ENCODE measurements at regions of chr1 and their contacts with region 1.

Region 1: DNA sequence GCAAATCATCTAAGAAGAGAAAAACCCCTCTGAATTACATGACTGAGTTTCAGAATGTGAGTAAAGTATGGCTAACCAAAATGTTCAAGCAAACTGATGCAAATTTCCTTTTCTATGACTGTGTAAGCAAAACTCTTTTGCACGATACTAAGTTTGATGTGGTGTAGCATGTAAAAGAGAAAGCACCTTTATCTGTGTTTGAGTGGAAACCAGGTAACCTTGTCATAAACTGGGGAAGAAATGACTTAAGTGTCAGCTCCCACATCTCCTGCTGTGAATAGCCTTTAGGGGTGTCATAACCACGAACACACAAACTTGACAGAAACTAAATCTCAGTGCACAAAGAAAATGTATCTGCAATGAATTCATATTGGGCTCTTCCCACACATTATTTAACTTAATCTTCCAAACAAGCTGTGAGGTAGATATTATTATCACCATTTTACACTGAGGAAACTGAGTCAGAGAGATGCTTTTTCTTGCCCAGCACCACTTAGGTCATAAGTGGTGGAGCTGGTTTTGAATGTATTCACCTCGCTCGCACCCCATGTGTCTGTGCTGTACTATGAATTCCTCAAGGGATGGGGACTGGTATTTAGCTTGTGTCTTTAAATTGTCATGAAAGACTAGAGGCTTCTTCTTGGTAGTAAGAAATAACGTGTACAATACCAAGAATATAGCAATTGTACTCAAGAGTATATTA is 32.9 kb upstream of the IL12RB2 start:
- DNase-seq: peak; percentile 44
- ATAC-seq: peak; percentile 90
- H3K4me3 Mint-ChIP-seq: no peak overlapping the region
- H3K27ac Mint-ChIP-seq: peak overlapping the region; percentile 76
- H3K4me1 Mint-ChIP-seq: peaks cover 54% of the 10 kb centered on the region
- H3K27me3 Mint-ChIP-seq: peaks cover 3% of the 10 kb centered on the region

Region 2: DNA sequence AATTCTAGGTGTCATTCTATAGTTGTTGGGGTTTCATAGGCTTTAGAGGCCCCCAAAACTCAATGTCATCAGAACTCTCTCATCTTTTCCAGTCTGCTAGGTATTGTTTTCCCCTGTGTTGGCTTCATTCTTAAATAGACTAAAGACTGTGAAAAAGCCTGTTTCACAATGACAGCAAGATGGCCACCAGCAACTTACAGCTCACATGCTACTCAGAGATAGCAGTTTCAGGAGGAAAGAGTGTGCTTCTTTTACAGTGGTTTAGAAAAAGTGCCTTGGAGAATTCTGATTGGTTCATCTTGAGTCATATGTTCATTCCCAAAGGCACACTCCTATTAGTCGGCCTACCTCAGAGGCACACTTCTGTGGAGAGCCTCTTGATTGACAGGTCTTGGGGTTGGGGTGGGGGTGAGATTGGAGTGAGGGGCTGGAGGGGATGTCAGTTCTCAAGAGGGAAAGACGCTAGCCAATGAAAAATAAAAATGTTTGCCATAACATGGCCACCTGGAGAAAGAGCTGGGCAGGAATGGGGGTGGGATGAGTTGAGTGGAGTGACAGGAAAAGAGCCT is 100.0 kb before region 1 on chr1:
- CTCF ChIA-PET with region 1: interaction called, 4 read pairs
- POLR2A ChIA-PET with region 1: interaction called, 7 read pairs
- intact Hi-C with region 1: loop called (anchors 1 kb)
- DNase-seq: peak; percentile 61
- ATAC-seq: peak; percentile 70
- H3K4me3 Mint-ChIP-seq: peak overlapping the region; percentile 25
- H3K27ac Mint-ChIP-seq: peak overlapping the region; percentile 94
- H3K4me1 Mint-ChIP-seq: peaks cover 68% of the 10 kb centered on the region
- H3K27me3 Mint-ChIP-seq: no peaks in the 10 kb centered on the region

Region 3: GRCh38 chr1:67239738-67240137 is 35.0 kb before region 1 on chr1:
- CTCF ChIA-PET with region 1: no interaction called
- POLR2A ChIA-PET with region 1: interaction called, 6 read pairs
- intact Hi-C with region 1: loop called in 1 of 2 experiments (anchors 2 kb)
- DNase-seq: peak; percentile 32
- ATAC-seq: peak; percentile 54
- H3K4me3 Mint-ChIP-seq: no peak overlapping the region
- H3K27ac Mint-ChIP-seq: peak overlapping the region; percentile 52
- H3K4me1 Mint-ChIP-seq: peaks cover 28% of the 10 kb centered on the region
- H3K27me3 Mint-ChIP-seq: peaks cover 2% of the 10 kb centered on the region

Region 4: DNA sequence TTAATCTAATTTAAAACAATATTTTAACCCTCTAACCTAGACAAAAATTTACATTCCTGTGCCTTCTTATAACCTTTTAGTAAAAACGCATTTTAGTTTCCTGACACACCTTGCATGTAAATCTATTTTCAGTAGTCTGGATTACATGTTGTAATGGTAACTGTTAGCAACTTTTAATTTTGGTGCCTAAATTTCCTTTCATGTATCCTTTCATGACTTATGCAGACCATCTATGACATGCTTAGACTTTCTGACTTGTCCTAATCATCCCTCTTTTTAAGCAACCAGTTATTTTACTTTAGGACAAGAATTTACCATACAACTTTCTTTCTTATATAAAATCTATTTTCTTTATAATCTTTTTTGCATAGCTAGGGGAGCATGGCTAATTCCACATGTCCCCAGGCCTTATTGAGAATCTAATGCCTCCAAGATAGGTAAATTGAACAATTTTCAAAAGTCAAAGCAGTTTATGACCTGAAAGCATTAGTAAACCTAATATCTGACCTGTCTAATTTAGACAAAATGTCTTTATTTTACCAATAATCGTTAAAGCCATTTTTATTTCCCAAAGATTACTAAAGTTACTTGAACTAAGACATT is 24.6 kb before region 1 on chr1:
- CTCF ChIA-PET with region 1: no interaction called
- POLR2A ChIA-PET with region 1: no interaction called
- intact Hi-C with region 1: no loop called
- DNase-seq: no peak
- ATAC-seq: no peak
- H3K4me3 Mint-ChIP-seq: no peak overlapping the region
- H3K27ac Mint-ChIP-seq: no peak overlapping the region
- H3K4me1 Mint-ChIP-seq: no peaks in the 10 kb centered on the region
- H3K27me3 Mint-ChIP-seq: peaks cover 10% of the 10 kb centered on the region

Region 5: GRCh38 chr1:67307251-67308060 is 32.7 kb after region 1 on chr1 and contains the start of gene IL12RB2:
- CTCF ChIA-PET with region 1: interaction called, 5 read pairs
- POLR2A ChIA-PET with region 1: interaction called, 6 read pairs
- intact Hi-C with region 1: loop called (anchors 1 kb)
- DNase-seq: peak; percentile 77
- ATAC-seq: peak; percentile 77
- H3K4me3 Mint-ChIP-seq: peak within 1 kb of the TSS; percentile 83
- H3K27ac Mint-ChIP-seq: peak within 1 kb of the TSS; percentile 90
- H3K4me1 Mint-ChIP-seq: peaks cover 48% of the 10 kb centered on the region
- H3K27me3 Mint-ChIP-seq: no peaks in the 10 kb centered on the region
- total RNA-seq, gene IL12RB2: 77.9 to 99.2 TPM

Region 6: DNA sequence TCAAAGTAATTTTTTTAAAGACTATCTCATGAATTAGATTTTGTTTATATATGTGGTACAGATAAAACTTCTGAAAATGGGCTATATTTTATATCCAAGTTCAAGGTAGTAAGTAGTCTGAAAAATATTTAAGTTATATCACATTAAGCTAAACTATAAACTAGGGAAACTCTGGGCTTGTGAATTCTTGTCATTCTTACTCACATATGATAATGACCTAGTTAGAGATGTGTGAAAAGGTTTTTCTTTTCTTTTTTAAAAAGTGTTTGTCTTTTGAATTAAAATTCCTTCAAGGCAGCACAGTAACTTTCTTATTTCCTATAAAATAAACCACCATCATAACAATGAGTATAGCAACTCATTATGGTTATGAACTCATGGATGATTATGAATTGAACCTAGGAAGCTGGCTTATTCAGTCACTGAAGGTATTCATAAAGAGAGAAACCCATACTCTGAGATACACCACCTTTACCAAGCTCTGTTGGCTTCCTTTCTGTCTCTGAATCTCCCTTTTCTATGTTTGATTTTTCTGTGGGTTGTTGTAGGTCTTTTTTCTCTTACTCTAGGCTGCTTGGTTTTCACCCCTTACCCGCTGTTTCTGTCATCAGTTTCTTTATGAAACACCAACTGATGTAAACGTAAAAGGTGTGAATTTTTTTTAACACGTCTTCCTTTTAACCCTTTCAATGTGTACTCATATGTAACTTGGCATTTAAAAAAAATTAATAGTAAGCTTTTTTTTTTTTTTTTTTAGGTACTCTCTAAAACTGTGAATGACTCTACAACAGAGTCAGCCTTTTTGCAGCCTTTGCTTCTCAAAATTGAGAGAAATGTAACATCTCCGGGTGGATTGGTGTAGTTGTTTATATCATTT is 58.1 kb after region 1 on chr1:
- CTCF ChIA-PET with region 1: interaction called, 16 read pairs
- POLR2A ChIA-PET with region 1: interaction called, 35 read pairs
- intact Hi-C with region 1: loop called (anchors 1 kb)
- DNase-seq: peak; percentile 62
- ATAC-seq: peak; percentile 86
- H3K4me3 Mint-ChIP-seq: peak overlapping the region; percentile 44
- H3K27ac Mint-ChIP-seq: peak overlapping the region; percentile 87
- H3K4me1 Mint-ChIP-seq: peaks cover 79% of the 10 kb centered on the region
- H3K27me3 Mint-ChIP-seq: no peaks in the 10 kb centered on the region

Measured in activated CD4-positive, alpha-beta T cell treated with anti-CD3 and anti-CD28 coated beads for 36 hours (primary cell).